Mammary epithelial cell (primary cell): ENCODE measurements at regions of chr22 and their contacts with region 1.

Region 1: GRCh38 chr22:25069758-25070481 is 117.4 kb downstream of the KIAA1671 start:
- DNase-seq: no peak
- H3K4me3 ChIP-seq: no peak overlapping the region
- H3K27ac ChIP-seq: no peak overlapping the region
- H3K4me1 ChIP-seq: peaks cover 5% of the 10 kb centered on the region
- H3K27me3 ChIP-seq: no peaks in the 10 kb centered on the region
- CTCF ChIP-seq: no peak

Region 2: DNA sequence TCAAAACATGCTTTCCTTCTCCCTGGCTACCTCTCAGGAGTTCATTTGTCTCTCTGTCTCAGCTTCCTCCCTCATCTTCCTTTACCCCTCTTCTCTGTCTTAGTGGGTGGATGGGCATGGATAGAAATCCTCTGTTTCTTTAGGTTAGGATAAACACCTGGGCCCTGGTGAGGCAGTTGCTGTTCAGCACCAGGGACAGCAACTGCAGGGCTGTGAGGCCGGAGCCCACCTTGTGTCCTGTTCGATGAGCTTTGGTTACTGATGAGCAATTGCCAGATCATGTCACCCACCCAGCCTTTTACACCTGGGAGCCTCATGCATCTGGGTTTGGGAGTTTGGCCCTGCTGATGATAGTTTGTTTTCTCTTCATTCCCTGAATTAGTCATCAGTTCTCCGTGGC is 123.6 kb after region 1 on chr22:
- CTCF ChIA-PET with region 1: no interaction called
- dilution Hi-C with region 1: loop called (anchors 10 kb)
- in situ Hi-C with region 1: no loop called
- intact Hi-C with region 1: no loop called
- DNase-seq: no peak
- H3K4me3 ChIP-seq: no peak overlapping the region
- H3K27ac ChIP-seq: no peak overlapping the region
- H3K4me1 ChIP-seq: no peaks in the 10 kb centered on the region
- H3K27me3 ChIP-seq: no peaks in the 10 kb centered on the region
- CTCF ChIP-seq: no peak